Dorsolateral prefrontal cortex (tissue), 120 donors: ENCODE measurements at regions of chr9 and their contacts with region 1.

Region 1: DNA sequence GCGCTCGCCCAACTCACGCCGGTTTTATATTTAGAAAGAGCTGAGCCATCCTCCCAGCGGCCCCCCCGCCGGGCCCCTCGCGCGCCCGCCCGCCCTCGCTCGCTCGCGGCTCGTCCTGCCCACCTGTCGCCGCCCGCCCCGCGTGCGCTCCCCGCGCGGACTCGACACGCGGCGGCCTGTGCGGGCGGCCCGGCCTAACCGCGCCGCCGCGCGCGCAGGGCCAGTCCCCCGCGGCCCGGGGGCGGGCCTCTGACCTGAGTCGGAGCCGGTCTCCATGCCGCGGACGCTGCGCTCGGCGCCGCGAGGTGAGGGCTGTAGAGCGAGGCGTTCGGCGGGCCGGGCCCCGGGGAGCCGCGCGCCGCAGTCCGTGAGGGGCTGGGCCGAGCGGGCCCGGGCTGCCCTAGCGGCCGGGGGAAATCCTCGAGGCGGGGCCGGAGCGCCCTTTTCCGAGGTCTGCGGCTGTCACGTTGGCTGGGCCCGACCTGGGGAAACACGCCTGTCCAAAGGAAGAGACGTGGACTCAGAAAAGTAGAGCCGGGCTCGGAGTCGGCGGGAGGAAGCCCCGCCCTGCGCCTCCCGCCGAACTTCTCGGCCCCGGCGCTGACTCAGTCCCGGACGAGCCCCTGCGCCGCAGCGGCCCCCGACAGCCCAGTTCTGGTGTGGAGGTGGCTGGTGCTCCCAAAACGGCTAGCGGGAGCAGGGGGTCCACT is at the start of gene ECPAS:
- DNase-seq: peak; percentile 28 to 80 (median 52)
- H3K4me3 ChIP-seq: peak within 1 kb of the TSS; percentile 57 to 97 (median 90)
- H3K27ac ChIP-seq: peak within 1 kb of the TSS; percentile 77 to 99 (median 96)
- H3K27me3 ChIP-seq: no peaks in the 10 kb centered on the region
- CTCF ChIP-seq: peak in 5 of 56 donors; percentile 6 to 26 (median 10)
- total RNA-seq, gene ECPAS: 79.2 to 151 (median 115) TPM

Region 2: GRCh38 chr9:111412280-111412679 is 71.7 kb before region 1 on chr9:
- intact Hi-C with region 1: loop called (anchors 2 kb)
- DNase-seq: peak in 8 of 10 donors; percentile 10 to 90 (median 68)
- H3K4me3 ChIP-seq: peak overlapping the region in 54 of 59 donors; percentile 4 to 66 (median 40)
- H3K27ac ChIP-seq: peak overlapping the region in 58 of 59 donors; percentile 42 to 97 (median 88)
- H3K27me3 ChIP-seq: no peaks in the 10 kb centered on the region
- CTCF ChIP-seq: peak in 55 of 56 donors; percentile 9 to 71 (median 40)

Region 3: DNA sequence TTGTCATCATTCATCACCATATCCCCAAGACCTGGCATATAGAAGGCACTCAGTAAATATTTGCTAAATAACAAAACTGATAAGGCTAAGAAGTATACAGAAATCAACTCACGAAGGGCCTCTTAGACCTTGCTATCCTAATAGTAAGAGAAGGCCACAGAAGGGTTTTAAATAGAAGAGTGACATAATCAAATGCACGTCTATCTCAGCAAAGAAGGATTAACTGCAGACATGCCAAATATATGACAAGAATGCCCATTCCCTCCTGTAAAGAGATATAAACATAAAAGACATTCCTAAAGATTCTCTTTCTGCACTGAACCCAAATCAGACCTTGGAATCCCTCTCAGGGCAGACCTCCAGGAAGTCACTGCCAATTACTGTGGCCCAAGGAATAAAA is 33.9 kb before region 1 on chr9:
- intact Hi-C with region 1: no loop called
- DNase-seq: no peak
- H3K4me3 ChIP-seq: no peak overlapping the region
- H3K27ac ChIP-seq: peak overlapping the region in 8 of 59 donors; percentile 1 to 41 (median 26)
- H3K27me3 ChIP-seq: no peaks in the 10 kb centered on the region
- CTCF ChIP-seq: no peak

Region 4: DNA sequence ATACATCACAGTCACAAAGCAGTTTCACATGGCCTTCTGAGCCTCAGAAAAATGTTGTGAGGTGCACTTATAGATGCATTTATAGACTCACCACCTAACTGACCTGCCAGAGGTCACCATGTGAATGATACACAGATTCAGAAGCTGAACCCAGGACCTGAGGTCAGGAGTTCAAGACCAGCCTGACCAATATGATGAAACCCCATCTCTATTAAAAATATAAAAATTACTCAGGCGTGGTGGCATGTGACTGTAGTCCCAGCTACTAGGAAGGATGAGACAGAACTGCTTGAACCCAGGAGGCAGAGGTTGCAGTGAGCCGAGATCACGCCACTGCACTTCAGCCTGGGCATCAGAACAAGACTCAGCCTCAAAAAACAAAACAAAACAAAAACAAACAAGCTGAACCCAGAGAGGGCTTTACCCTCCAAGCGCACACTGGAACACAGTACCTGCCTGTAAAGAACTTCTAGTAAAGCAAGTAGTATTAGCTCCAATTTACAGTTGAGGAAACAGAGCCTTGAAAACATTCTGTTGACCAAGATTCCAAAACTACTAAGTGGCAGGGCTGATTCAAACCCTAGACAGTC is 16.1 kb before region 1 on chr9:
- intact Hi-C with region 1: no loop called
- DNase-seq: no peak
- H3K4me3 ChIP-seq: no peak overlapping the region
- H3K27ac ChIP-seq: peak overlapping the region in 37 of 59 donors; percentile 1 to 69 (median 37)
- H3K27me3 ChIP-seq: no peaks in the 10 kb centered on the region
- CTCF ChIP-seq: no peak

Region 5: GRCh38 chr9:111805830-111806241 is 321.8 kb after region 1 on chr9:
- intact Hi-C with region 1: no loop called
- DNase-seq: no peak
- H3K4me3 ChIP-seq: no peak overlapping the region
- H3K27ac ChIP-seq: no peak overlapping the region
- H3K27me3 ChIP-seq: no peaks in the 10 kb centered on the region
- CTCF ChIP-seq: no peak